Endothelial cell of umbilical vein (primary cell): ENCODE measurements at regions of chr3 and their contacts with region 1.

Region 1: DNA sequence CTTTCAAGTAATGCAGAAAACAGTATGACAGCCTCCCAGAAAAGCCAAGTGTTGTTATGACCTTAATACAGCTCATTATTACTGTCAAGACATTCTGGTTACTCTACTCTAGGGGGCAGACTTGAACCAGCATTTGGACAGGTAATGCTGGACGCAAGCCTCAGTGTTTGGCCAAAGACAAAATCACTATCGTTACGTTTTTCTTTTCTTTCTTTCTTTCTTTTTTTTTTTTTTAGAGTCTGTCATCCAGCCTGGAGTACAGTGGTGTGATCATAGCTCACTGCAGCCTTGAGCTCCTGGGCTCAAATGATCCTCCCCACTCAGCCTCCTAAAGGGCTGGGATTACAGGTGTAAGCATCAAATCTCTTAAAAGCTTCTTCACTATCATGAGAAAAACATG is 29.4 kb upstream of the TMEM45A start:
- DNase-seq: peak; percentile 52
- H3K4me3 ChIP-seq: no peak overlapping the region
- H3K27ac ChIP-seq: no peak overlapping the region
- H3K4me1 ChIP-seq: no peaks in the 10 kb centered on the region
- H3K27me3 ChIP-seq: peaks cover 3 to 5% of the 10 kb centered on the region in 2 experiments
- CTCF ChIP-seq: peak; percentile 55 to 68
- POLR2A ChIP-seq: no peak

Region 2: GRCh38 chr3:100316641-100317069 is 146.3 kb before region 1 on chr3:
- CTCF ChIA-PET with region 1: interaction called, 11 read pairs
- POLR2A ChIA-PET with region 1: no interaction called
- dilution Hi-C with region 1: no loop called
- intact Hi-C with region 1: loop called (anchors 1 kb)
- DNase-seq: peak; percentile 64
- H3K4me3 ChIP-seq: no peak overlapping the region
- H3K27ac ChIP-seq: no peak overlapping the region
- H3K4me1 ChIP-seq: no peaks in the 10 kb centered on the region
- H3K27me3 ChIP-seq: no peaks in the 10 kb centered on the region
- CTCF ChIP-seq: peak; percentile 46 to 48
- POLR2A ChIP-seq: no peak

Region 3: DNA sequence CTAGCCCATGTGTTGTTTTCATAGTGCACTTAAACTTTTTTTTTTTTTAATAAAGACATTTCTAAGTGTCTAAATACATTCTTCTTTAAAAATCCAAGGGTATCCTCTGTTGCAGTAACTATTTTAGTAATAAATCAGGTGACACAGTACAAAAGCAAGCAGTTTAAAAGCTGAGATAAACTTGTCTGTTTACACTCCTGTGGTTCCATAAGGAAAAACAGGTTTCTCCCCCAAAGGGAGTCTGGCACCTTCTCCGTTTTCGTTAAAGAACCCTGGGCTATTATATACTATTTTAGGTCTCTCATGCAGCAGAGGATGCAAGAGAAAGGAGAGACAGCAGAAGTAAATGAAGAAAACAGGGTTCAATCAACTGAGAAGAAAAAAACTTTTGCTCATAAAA is 13.8 kb before region 1 on chr3:
- CTCF ChIA-PET with region 1: interaction called, 23 read pairs
- POLR2A ChIA-PET with region 1: no interaction called
- dilution Hi-C with region 1: no loop called
- intact Hi-C with region 1: no loop called
- DNase-seq: no peak
- H3K4me3 ChIP-seq: no peak overlapping the region
- H3K27ac ChIP-seq: no peak overlapping the region
- H3K4me1 ChIP-seq: no peaks in the 10 kb centered on the region
- H3K27me3 ChIP-seq: no peaks in the 10 kb centered on the region
- CTCF ChIP-seq: no peak
- POLR2A ChIP-seq: no peak

Region 4: GRCh38 chr3:100577382-100578002 is 114.5 kb after region 1 on chr3:
- CTCF ChIA-PET with region 1: interaction called, 23 read pairs
- POLR2A ChIA-PET with region 1: no interaction called
- dilution Hi-C with region 1: no loop called
- intact Hi-C with region 1: no loop called
- DNase-seq: no peak
- H3K4me3 ChIP-seq: no peak overlapping the region
- H3K27ac ChIP-seq: no peak overlapping the region
- H3K4me1 ChIP-seq: no peaks in the 10 kb centered on the region
- H3K27me3 ChIP-seq: no peaks in the 10 kb centered on the region
- CTCF ChIP-seq: no peak
- POLR2A ChIP-seq: no peak

Region 5: DNA sequence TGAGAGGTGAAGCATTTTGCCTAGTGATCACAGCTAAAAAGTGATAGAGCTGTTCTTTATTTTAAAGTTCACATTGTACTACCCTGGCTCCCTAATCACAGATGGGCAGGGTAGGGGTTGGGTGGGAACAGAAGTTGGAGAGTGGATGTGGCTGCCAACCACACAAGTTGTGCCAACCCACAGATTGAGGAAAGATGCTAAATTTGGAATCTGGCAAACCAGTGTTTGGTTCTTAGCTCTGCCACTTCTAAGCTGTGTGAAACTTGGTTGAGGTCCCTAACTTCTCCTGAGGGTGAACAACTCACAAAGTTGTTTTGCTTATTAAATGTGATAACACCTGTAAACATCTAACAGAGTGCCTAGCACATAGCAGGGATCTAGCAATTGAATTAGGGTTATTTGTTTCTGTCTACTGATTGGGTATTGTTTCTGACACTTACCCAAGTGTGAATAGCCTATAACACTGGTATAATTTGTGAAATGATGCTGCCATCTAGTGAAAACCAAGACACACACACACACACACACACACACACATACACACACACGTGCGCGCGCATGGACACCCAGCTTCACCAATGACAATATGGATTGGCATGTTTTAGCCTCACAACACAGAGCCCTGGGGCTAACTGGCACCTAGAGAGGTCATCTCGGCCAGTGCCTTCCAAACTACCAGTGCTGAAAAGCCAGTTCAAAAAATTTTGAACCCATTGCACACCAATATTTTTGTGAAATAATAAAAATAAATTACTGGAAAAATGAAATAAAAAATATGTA is 171.7 kb after region 1 on chr3:
- CTCF ChIA-PET with region 1: interaction called, 51 read pairs
- POLR2A ChIA-PET with region 1: no interaction called
- dilution Hi-C with region 1: no loop called
- intact Hi-C with region 1: loop called (anchors 5 kb)
- DNase-seq: peak; percentile 40
- H3K4me3 ChIP-seq: no peak overlapping the region
- H3K27ac ChIP-seq: no peak overlapping the region
- H3K4me1 ChIP-seq: peaks cover 7% of the 10 kb centered on the region
- H3K27me3 ChIP-seq: no peaks in the 10 kb centered on the region
- CTCF ChIP-seq: peak in 1 of 2 donors; percentile 6
- POLR2A ChIP-seq: no peak

Region 6: GRCh38 chr3:100737334-100737733 is 274.3 kb after region 1 on chr3:
- CTCF ChIA-PET with region 1: interaction called, 13 read pairs
- POLR2A ChIA-PET with region 1: no interaction called
- dilution Hi-C with region 1: no loop called
- intact Hi-C with region 1: no loop called
- DNase-seq: peak; percentile 48
- H3K4me3 ChIP-seq: no peak overlapping the region
- H3K27ac ChIP-seq: no peak overlapping the region
- H3K4me1 ChIP-seq: no peaks in the 10 kb centered on the region
- H3K27me3 ChIP-seq: no peaks in the 10 kb centered on the region
- CTCF ChIP-seq: peak; percentile 19 to 36
- POLR2A ChIP-seq: no peak

Region 7: DNA sequence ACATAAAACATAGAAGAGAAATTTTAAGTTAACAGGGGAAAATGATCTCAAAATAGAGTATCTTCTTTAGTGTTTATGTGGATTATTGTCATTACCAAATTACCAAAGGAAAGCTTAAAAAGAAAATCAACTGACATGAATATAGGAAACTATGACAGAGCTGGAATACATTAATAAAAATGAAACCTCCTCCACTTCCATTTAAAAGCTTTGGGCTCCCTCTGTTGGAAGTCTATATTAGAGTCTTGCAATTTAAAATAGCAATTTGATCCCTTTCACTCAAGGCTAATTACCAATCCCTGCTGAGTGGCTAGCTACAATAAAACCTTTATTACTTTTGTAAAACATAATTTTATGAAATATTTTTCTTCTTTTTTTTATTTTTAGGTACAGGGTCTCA is 918.8 kb after region 1 on chr3:
- CTCF ChIA-PET with region 1: interaction called, 18 read pairs
- POLR2A ChIA-PET with region 1: no interaction called
- dilution Hi-C with region 1: no loop called
- intact Hi-C with region 1: no loop called
- DNase-seq: peak; percentile 40
- H3K4me3 ChIP-seq: no peak overlapping the region
- H3K27ac ChIP-seq: no peak overlapping the region
- H3K4me1 ChIP-seq: no peaks in the 10 kb centered on the region
- H3K27me3 ChIP-seq: no peaks in the 10 kb centered on the region
- CTCF ChIP-seq: peak; percentile 7 to 11
- POLR2A ChIP-seq: no peak